Dendritic cell treated with granulocyte-macrophage colony-stimulating factor and Interleukin-4, amounts not matched to agents 40 ng/mL and 50 ng/mL, for 4 days (primary cell): ENCODE measurements at regions of chr18 and their contacts with region 1.

Region 1: DNA sequence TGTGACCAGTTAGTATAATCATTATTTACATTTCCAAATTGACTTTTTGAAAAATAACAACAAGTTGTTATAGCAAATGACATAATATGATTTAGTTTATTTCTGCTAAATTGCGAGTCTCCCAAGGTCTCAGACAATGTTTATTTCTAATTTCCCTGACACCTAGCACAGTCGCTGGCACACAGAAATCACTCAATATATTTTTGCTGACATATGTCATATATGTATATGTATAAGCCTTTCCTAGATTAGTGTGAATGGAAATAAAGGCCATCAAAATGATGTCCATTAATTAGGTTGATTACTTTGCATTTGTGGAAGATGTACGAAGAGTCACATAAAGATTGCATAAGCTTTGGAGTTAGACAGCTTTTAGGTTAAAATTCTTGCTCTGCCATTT is 136.7 kb upstream of the CDH2 start:
- H3K4me3 Mint-ChIP-seq: no peak overlapping the region
- H3K27ac Mint-ChIP-seq: no peak overlapping the region
- H3K4me1 Mint-ChIP-seq: no peaks in the 10 kb centered on the region
- H3K27me3 Mint-ChIP-seq: no peaks in the 10 kb centered on the region

Region 2: GRCh38 chr18:28127763-28128663 is 185.6 kb before region 1 on chr18:
- intact Hi-C with region 1: no loop called
- H3K4me3 Mint-ChIP-seq: no peak overlapping the region
- H3K27ac Mint-ChIP-seq: no peak overlapping the region
- H3K4me1 Mint-ChIP-seq: no peaks in the 10 kb centered on the region
- H3K27me3 Mint-ChIP-seq: no peaks in the 10 kb centered on the region

Region 3: GRCh38 chr18:28331551-28331950 is 17.9 kb after region 1 on chr18:
- intact Hi-C with region 1: loop called (anchors 2 kb)
- H3K4me3 Mint-ChIP-seq: no peak overlapping the region
- H3K27ac Mint-ChIP-seq: no peak overlapping the region
- H3K4me1 Mint-ChIP-seq: no peaks in the 10 kb centered on the region
- H3K27me3 Mint-ChIP-seq: no peaks in the 10 kb centered on the region

Region 4: DNA sequence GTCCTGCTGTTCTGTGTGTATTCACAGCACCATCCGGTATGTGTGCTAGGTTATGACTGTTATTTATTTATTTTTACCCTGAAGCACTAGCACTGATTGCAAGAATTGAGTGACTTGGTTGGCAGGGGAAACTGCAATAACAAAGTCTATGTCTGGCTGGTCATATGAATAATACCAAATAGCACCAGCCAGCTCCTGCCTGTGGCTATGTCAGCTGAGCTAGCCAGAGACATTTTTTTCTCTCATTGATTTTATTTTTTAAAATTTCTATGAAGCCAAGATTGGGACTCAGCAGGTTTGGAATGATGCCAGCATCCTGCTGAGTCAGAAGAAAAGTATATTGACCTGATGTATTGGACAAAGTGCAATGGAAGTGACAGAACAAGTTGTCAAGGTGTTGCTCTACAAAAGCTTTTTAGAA is 51.8 kb after region 1 on chr18:
- intact Hi-C with region 1: no loop called
- H3K4me3 Mint-ChIP-seq: no peak overlapping the region
- H3K27ac Mint-ChIP-seq: no peak overlapping the region
- H3K4me1 Mint-ChIP-seq: no peaks in the 10 kb centered on the region
- H3K27me3 Mint-ChIP-seq: no peaks in the 10 kb centered on the region

Region 5: GRCh38 chr18:28504100-28504499 is 190.5 kb after region 1 on chr18:
- intact Hi-C with region 1: no loop called
- H3K4me3 Mint-ChIP-seq: no peak overlapping the region
- H3K27ac Mint-ChIP-seq: no peak overlapping the region
- H3K4me1 Mint-ChIP-seq: no peaks in the 10 kb centered on the region
- H3K27me3 Mint-ChIP-seq: no peaks in the 10 kb centered on the region